Stomach (tissue), 19 donors: ENCODE measurements at regions of chr14 and their contacts with region 1.

Region 1: GRCh38 chr14:103546652-103547454 is 15.6 kb downstream of the BAG5 start:
- DNase-seq: peak; percentile 80 to 89
- H3K4me3 ChIP-seq: no peak overlapping the region
- H3K27ac ChIP-seq: no peak overlapping the region
- H3K4me1 ChIP-seq: peaks cover 53 to 85% (median 62%) of the 10 kb centered on the region in 4 donors
- H3K27me3 ChIP-seq: peaks cover 0 to 6% (median 0%) of the 10 kb centered on the region in 3 donors
- CTCF ChIP-seq: peak in 5 of 7 experiments; percentile 80 to 97 (median 90)
- EP300 ChIP-seq: no peak
- POLR2A ChIP-seq: no peak

Region 2: DNA sequence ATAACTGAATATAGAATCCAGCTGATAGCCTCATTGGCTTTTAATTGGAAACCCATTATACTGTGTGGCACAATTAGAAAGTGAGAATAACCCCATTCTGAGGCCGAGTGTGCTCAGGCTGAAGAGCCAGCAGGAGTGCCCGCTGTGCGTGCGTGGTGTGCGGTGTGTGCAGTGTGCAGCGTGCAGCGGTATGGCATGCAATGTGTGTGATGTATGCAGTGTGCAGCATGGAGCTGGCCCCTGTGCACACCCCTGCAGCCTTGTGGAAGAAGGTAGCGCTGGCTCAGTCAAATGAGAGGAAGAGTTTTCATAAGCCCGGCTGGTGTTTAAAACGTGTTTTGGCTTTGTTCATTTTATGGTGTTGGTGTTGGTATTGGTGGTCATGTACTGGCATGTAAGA is 47.1 kb before region 1 on chr14:
- intact Hi-C with region 1: loop called (anchors 10 kb)
- DNase-seq: no peak
- H3K4me3 ChIP-seq: no peak overlapping the region
- H3K27ac ChIP-seq: no peak overlapping the region
- H3K4me1 ChIP-seq: peaks cover 0 to 12% (median 6%) of the 10 kb centered on the region in 4 donors
- H3K27me3 ChIP-seq: no peaks in the 10 kb centered on the region
- CTCF ChIP-seq: no peak
- EP300 ChIP-seq: no peak
- POLR2A ChIP-seq: no peak

Region 3: GRCh38 chr14:103518422-103519042 is 28.3 kb before region 1 on chr14:
- intact Hi-C with region 1: loop called (anchors 2 kb)
- DNase-seq: peak; percentile 81 to 87
- H3K4me3 ChIP-seq: no peak overlapping the region
- H3K27ac ChIP-seq: peak overlapping the region; percentile 53 to 94 (median 84)
- H3K4me1 ChIP-seq: peaks cover 51 to 70% (median 62%) of the 10 kb centered on the region in 4 donors
- H3K27me3 ChIP-seq: peaks cover 0 to 32% (median 20%) of the 10 kb centered on the region in 3 donors
- CTCF ChIP-seq: peak in 6 of 7 experiments; percentile 11 to 97 (median 94)
- EP300 ChIP-seq: no peak
- POLR2A ChIP-seq: no peak

Region 4: GRCh38 chr14:103657471-103657870 is 110.6 kb after region 1 on chr14:
- intact Hi-C with region 1: no loop called
- DNase-seq: no peak
- H3K4me3 ChIP-seq: no peak overlapping the region
- H3K27ac ChIP-seq: peak overlapping the region in 1 of 5 donors; percentile 60
- H3K4me1 ChIP-seq: peaks cover 9 to 54% (median 26%) of the 10 kb centered on the region in 4 donors
- H3K27me3 ChIP-seq: no peaks in the 10 kb centered on the region
- CTCF ChIP-seq: no peak
- EP300 ChIP-seq: no peak
- POLR2A ChIP-seq: no peak